ENCODE measurements at regions of chr19 and their contacts with region 1.

Region 1: GRCh38 chr19:9140159-9140874 is at the start of gene ZNF317:
- DNase-seq: peak; percentile 88
- H3K4me3 Mint-ChIP-seq: peak within 1 kb of the TSS; percentile 95
- H3K27ac Mint-ChIP-seq: peak within 1 kb of the TSS; percentile 94
- H3K4me1 Mint-ChIP-seq: peaks cover 33% of the 10 kb centered on the region
- H3K27me3 Mint-ChIP-seq: no peaks in the 10 kb centered on the region
- total RNA-seq, gene ZNF317: 50.7 and 53.3 TPM in 2 replicates

Region 2: GRCh38 chr19:8832132-8833021 is 307.9 kb before region 1 on chr19 and contains the starts of genes MBD3L1 and ZNF558:
- intact Hi-C with region 1: loop called (anchors 1 kb)
- DNase-seq: peak; percentile 98
- H3K4me3 Mint-ChIP-seq: peak within 1 kb of the TSS; percentile 84
- H3K27ac Mint-ChIP-seq: peak within 1 kb of the TSS; percentile 95
- H3K4me1 Mint-ChIP-seq: peaks cover 20% of the 10 kb centered on the region
- H3K27me3 Mint-ChIP-seq: no peaks in the 10 kb centered on the region
- total RNA-seq, gene MBD3L1: not detected in 2 replicates
- total RNA-seq, gene ZNF558: 18.7 and 23.2 TPM in 2 replicates

Region 3: DNA sequence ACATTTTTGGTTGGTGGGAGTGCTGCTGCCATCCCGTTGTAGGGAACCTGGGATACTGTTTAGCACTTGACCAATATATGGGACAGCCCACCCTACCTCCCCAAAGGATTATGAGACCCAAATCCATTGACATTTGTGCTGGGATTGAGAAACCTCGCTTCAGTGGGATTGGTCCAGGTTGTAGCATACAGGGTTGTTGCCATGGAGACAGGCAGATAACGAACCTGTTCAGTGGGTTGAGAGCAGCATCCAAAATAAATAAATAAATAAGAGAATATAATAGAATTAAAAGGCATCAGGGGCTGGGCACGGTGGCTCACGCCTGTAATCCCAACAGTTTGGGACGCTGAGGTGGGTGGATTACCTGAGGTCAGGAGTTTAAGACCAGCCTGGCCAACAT is 141.4 kb before region 1 on chr19:
- intact Hi-C with region 1: no loop called
- DNase-seq: no peak
- H3K4me3 Mint-ChIP-seq: no peak overlapping the region
- H3K27ac Mint-ChIP-seq: no peak overlapping the region
- H3K4me1 Mint-ChIP-seq: no peaks in the 10 kb centered on the region
- H3K27me3 Mint-ChIP-seq: no peaks in the 10 kb centered on the region

Region 4: DNA sequence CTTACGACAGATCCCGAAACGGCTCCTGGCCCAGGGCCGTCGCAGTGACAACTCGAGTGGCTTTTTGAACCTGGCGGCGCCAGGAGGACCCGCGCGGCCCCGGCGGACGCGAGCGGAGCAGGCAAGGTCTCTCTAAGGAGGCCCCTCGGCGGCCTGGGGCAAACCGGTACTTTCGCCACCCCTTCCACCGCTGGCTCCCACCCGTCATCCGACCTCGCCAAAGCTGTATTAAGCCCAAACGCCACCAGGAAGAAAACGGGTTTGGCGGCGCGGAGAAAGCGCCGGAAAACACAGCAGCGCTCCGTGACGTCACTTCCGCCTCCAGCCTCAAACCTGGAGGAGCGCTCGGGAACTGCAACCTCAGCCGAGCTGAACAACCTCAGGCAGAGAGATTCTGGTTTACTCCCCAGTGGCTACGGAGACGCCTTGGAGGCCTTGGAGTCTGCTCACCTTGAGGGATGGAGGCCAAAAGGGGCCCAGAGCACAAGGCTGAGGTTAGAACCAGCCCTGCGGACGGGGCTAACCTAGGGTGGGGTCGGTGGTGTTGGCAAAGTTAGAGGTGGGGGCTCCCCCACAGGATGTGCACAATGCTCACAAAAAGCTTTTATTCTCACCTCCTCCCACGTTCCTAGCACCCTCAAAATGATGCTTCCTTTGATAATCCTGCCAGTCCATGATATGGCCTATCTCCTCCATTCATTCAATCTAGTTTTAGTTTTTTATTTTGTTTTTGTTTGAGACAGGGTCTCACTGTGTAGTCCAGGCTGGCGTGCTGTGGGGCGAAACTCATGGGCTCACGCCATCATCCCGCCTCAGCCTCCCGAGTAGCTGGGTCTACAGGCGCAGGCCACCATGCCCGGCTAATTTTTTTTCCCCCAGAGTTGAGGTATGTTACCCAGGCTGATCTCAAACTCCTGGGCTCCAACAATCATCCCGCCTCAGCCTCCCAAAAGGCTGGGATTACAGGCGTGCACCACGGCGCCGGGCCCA is 295.3 kb after region 1 on chr19 and contains the start of gene ZNF266:
- intact Hi-C with region 1: loop called (anchors 1 kb)
- DNase-seq: peak; percentile 88
- H3K4me3 Mint-ChIP-seq: peak within 1 kb of the TSS; percentile 94
- H3K27ac Mint-ChIP-seq: peak within 1 kb of the TSS; percentile 97
- H3K4me1 Mint-ChIP-seq: peaks cover 29% of the 10 kb centered on the region
- H3K27me3 Mint-ChIP-seq: no peaks in the 10 kb centered on the region
- total RNA-seq, gene ZNF266: 25.3 and 28.2 TPM in 2 replicates

Region 5: DNA sequence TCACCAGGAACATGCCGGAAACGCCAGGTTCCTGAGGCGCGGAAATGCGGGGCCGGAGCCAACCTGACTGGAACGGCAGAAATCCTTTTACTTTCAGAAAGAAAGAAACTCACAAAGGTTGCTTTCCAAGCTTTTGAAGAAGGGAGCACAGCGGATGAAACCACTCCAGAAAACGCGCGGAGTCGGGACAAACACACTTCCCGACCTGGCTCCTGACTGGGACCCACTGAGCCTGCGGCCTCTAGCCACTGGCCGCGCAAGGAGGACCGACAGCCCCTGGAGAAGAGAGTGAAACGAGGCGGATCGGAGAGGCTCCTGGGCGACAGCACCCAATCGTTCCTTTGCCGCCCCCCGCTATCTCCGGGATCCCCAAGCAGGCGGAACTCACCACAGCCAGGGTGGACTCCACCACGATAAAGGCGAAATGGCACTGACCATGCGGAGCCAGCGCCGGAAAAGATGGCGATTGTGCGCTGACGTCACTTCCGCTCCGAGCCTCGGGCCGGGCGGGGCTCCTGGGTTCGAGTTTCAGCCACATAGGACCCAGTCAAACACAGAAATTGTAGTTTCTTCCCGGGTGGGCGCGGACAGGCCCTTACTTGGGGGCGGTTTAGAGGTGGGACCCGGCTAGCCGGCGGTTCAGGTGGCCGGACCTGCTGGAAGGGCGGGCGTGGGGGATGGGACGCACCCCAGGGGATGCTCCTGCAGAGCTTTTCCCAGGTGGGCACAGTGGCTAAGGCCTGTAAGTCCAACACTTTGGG is 443.9 kb after region 1 on chr19 and contains the start of gene ZNF121:
- intact Hi-C with region 1: loop called (anchors 1 kb)
- DNase-seq: peak; percentile 76
- H3K4me3 Mint-ChIP-seq: peak within 1 kb of the TSS; percentile 93
- H3K27ac Mint-ChIP-seq: peak within 1 kb of the TSS; percentile 94
- H3K4me1 Mint-ChIP-seq: peaks cover 24% of the 10 kb centered on the region
- H3K27me3 Mint-ChIP-seq: no peaks in the 10 kb centered on the region
- total RNA-seq, gene ZNF121: 63.4 and 64.8 TPM in 2 replicates

Region 6: DNA sequence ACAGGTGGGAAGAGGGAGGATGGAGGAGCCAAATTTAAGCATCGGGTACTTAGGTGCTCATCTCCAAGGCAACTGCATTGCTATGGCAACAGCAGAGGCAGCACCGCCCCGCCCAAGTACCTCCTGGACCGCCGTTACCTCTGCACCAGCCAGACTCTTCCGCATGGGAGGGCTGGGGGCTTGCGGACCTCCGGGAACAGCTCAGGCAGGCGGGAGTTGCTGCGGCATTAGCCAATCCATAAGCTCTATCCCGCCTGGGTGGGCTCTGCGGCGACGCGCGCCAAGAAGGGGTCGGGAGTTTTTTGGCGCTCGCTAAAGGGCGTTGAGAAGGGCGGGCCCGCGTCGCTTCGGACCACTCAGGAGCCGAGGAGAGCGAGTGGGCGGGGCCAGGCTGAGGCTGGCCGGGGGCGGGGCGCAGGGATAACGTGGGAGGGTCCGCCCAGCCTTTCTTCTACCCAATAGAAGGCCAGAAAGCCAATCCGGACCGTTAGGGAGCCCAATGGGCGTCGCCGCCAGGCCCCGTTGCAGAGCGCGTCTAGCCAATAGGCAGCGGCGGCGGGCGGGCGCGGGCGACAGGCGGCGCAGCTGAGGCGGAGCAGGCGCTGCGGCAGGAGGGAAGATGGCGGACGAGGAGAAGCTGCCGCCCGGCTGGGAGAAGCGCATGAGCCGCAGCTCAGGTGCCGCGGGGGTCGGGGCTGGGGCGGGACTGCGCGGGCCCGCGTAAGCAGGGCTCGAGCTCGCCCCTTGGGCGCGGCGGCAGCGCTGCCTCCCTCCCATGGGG is 694.6 kb after region 1 on chr19 and contains the start of gene PIN1:
- intact Hi-C with region 1: loop called (anchors 1 kb)
- DNase-seq: peak; percentile 99
- H3K4me3 Mint-ChIP-seq: peak within 1 kb of the TSS; percentile 97
- H3K27ac Mint-ChIP-seq: peak within 1 kb of the TSS; percentile 90
- H3K4me1 Mint-ChIP-seq: peaks cover 10% of the 10 kb centered on the region
- H3K27me3 Mint-ChIP-seq: no peaks in the 10 kb centered on the region
- total RNA-seq, gene PIN1: 86.4 and 87.3 TPM in 2 replicates

Measured in activated T-helper 1 cell treated with anti-CD3 and anti-CD28 coated beads, Interleukin-12 subunit alpha, Interleukin-12 subunit beta, Interleukin-2, Interleukin-4 antibody, amounts not matched to agents 30 ng/mL and 10 ng/mL and 1 ng/mL, durations not matched to agents 14 hours and 24 hours and 36 hours (primary cell).